ENCODE measurements at regions of chr15 and their contacts with region 1.

Region 1: DNA sequence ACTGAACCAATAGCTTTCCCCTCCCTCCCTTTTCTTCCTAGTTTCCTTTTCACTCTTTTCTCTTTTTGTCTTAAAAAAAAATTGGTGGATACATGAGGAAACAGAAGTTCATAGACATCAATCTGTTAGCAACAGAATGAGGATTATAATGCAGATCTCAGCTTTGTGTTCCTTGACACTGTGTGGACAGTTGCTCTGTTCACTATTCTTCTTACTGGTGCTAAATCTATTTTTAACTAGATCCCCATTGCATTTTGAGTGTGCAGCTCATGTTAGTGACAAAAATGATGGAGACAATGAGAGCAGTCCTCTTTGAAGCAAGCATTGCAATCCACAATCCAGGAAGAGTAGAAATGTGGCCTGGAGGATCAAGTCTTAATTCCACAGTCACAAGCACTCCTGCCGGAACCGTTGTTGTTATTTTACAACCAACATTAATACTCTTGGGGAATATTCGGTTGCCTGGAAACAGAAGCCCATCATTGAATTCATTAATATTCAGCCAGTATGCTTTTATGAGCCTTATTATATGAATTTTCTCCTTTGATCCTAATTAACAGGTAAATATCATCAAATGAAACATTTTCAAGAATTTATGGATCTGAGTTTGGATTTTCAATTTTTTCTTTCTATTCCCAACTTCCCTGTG is 1016.8 kb downstream of the NTRK3 start:
- DNase-seq: no peak
- ATAC-seq: no peak
- H3K4me3 ChIP-seq: no peak overlapping the region
- H3K27ac ChIP-seq: no peak overlapping the region
- H3K4me1 ChIP-seq: no peaks in the 10 kb centered on the region
- H3K27me3 ChIP-seq: no peaks in the 10 kb centered on the region

Region 2: GRCh38 chr15:87172667-87173066 is 67.0 kb before region 1 on chr15:
- intact Hi-C with region 1: loop called in 1 of 2 experiments (anchors 10 kb)
- DNase-seq: no peak
- ATAC-seq: no peak
- H3K4me3 ChIP-seq: no peak overlapping the region
- H3K27ac ChIP-seq: no peak overlapping the region
- H3K4me1 ChIP-seq: no peaks in the 10 kb centered on the region
- H3K27me3 ChIP-seq: peaks cover 0 to 2% of the 10 kb centered on the region in 2 donors

Measured in aorta (tissue), 5 donors.